CD14-positive monocyte (primary cell): ENCODE measurements at regions of chr13 and their contacts with region 1.

Region 1: GRCh38 chr13:101127741-101128353 is 288.5 kb downstream of the NALCN start:
- DNase-seq: peak in 1 of 3 donors; percentile 6
- H3K4me3 ChIP-seq: no peak overlapping the region
- H3K4me3 Mint-ChIP-seq: no peak overlapping the region
- H3K27ac ChIP-seq: no peak overlapping the region
- H3K27ac Mint-ChIP-seq: no peak overlapping the region
- H3K4me1 ChIP-seq: no peaks in the 10 kb centered on the region
- H3K4me1 Mint-ChIP-seq: no peaks in the 10 kb centered on the region
- H3K27me3 ChIP-seq: no peaks in the 10 kb centered on the region
- H3K27me3 Mint-ChIP-seq: peaks cover 3 to 5% (median 3%) of the 10 kb centered on the region in 3 donors
- CTCF ChIP-seq: peak; percentile 75

Region 2: GRCh38 chr13:100573121-100573520 is 554.7 kb before region 1 on chr13:
- intact Hi-C with region 1: loop called (anchors 5 kb)
- DNase-seq: peak; percentile 51 to 79 (median 70)
- H3K4me3 ChIP-seq: no peak overlapping the region
- H3K4me3 Mint-ChIP-seq: no peak overlapping the region
- H3K27ac ChIP-seq: no peak overlapping the region
- H3K27ac Mint-ChIP-seq: no peak overlapping the region
- H3K4me1 ChIP-seq: no peaks in the 10 kb centered on the region
- H3K4me1 Mint-ChIP-seq: no peaks in the 10 kb centered on the region
- H3K27me3 ChIP-seq: no peaks in the 10 kb centered on the region
- H3K27me3 Mint-ChIP-seq: no peaks in the 10 kb centered on the region
- CTCF ChIP-seq: peak; percentile 89

Region 3: GRCh38 chr13:101090287-101090686 is 37.6 kb before region 1 on chr13:
- intact Hi-C with region 1: no loop called
- DNase-seq: no peak
- H3K4me3 ChIP-seq: no peak overlapping the region
- H3K4me3 Mint-ChIP-seq: no peak overlapping the region
- H3K27ac ChIP-seq: no peak overlapping the region
- H3K27ac Mint-ChIP-seq: no peak overlapping the region
- H3K4me1 ChIP-seq: no peaks in the 10 kb centered on the region
- H3K4me1 Mint-ChIP-seq: no peaks in the 10 kb centered on the region
- H3K27me3 ChIP-seq: no peaks in the 10 kb centered on the region
- H3K27me3 Mint-ChIP-seq: peaks cover 0 to 2% (median 0%) of the 10 kb centered on the region in 3 donors
- CTCF ChIP-seq: no peak